K562 (cell line): ENCODE measurements at regions of chr3 and their contacts with region 1.

Region 1: GRCh38 chr3:157865352-157866000 is 240.7 kb downstream of the SHOX2 start:
- DNase-seq: peak; percentile 71 to 80 (median 76)
- ATAC-seq: peak; percentile 100
- H3K4me3 ChIP-seq: no peak overlapping the region
- H3K27ac ChIP-seq: no peak overlapping the region
- H3K4me1 ChIP-seq: no peaks in the 10 kb centered on the region
- H3K27me3 ChIP-seq: no peaks in the 10 kb centered on the region
- CTCF ChIP-seq: peak; percentile 80 to 94 (median 89)
- EP300 ChIP-seq: no peak
- POLR2A ChIP-seq: no peak
- RAD21 ChIP-seq: peak; percentile 93 to 94

Region 2: DNA sequence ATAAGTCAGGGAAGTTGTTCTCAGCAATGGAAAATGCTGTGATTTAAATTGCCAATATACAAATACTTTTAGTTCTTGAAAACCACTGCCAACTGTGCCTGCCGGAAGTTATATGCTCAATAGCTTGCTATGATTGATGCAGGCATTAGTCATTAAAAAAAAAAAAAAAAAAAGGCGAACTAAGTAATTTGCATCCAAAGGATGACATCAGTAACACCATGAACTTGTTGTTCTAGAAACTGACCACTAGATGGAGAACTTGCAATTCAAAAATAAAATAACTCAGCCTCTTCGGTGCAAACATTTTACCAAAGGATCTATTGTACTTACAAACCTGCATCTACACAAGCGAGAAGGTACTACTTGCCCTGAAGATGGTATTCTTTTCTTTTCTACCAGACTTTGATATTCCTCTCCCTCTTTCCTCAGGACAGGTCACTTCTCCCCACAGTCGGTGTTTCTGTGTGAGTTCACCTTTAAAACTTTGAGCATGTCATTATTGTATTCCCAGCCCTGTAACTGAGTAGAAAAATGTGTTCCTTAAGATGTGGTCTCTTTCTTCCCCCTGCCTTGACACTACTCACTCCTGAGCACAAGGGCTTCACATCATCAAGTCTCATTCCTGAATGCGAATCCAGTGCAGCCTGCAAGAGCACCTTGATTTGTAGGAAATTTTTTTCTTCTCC is 247.3 kb before region 1 on chr3:
- CTCF ChIA-PET with region 1: no interaction called
- POLR2A ChIA-PET with region 1: no interaction called
- in situ Hi-C with region 1: no loop called
- intact Hi-C with region 1: loop called (anchors 5 kb)
- DNase-seq: peak; percentile 57 to 70 (median 66)
- ATAC-seq: peak; percentile 78
- H3K4me3 ChIP-seq: no peak overlapping the region
- H3K27ac ChIP-seq: no peak overlapping the region
- H3K4me1 ChIP-seq: no peaks in the 10 kb centered on the region
- H3K27me3 ChIP-seq: peaks cover 0 to 6% of the 10 kb centered on the region in 2 experiments; a peak in 3 of 5 replicates
- CTCF ChIP-seq: peak; percentile 29 to 74 (median 60); a peak in 5 of 6 replicates
- EP300 ChIP-seq: no peak
- POLR2A ChIP-seq: no peak
- RAD21 ChIP-seq: peak; percentile 59 to 71

Region 3: GRCh38 chr3:157785102-157785826 is 80.2 kb before region 1 on chr3:
- CTCF ChIA-PET with region 1: no interaction called
- POLR2A ChIA-PET with region 1: no interaction called
- in situ Hi-C with region 1: no loop called
- intact Hi-C with region 1: no loop called
- DNase-seq: peak in 3 of 4 experiments; percentile 8 to 40 (median 33)
- ATAC-seq: peak; percentile 80
- H3K4me3 ChIP-seq: no peak overlapping the region
- H3K27ac ChIP-seq: no peak overlapping the region
- H3K4me1 ChIP-seq: no peaks in the 10 kb centered on the region; a peak in 1 of 5 replicates
- H3K27me3 ChIP-seq: no peaks in the 10 kb centered on the region
- CTCF ChIP-seq: no peak
- EP300 ChIP-seq: no peak
- POLR2A ChIP-seq: no peak
- RAD21 ChIP-seq: no peak

Region 4: GRCh38 chr3:158094235-158095110 is 229.0 kb after region 1 on chr3:
- CTCF ChIA-PET with region 1: no interaction called
- POLR2A ChIA-PET with region 1: no interaction called
- in situ Hi-C with region 1: no loop called
- intact Hi-C with region 1: loop called (anchors 5 kb)
- DNase-seq: no peak
- ATAC-seq: no peak
- H3K4me3 ChIP-seq: no peak overlapping the region
- H3K27ac ChIP-seq: no peak overlapping the region
- H3K4me1 ChIP-seq: no peaks in the 10 kb centered on the region
- H3K27me3 ChIP-seq: no peaks in the 10 kb centered on the region
- CTCF ChIP-seq: no peak
- EP300 ChIP-seq: no peak
- POLR2A ChIP-seq: no peak
- RAD21 ChIP-seq: no peak

Region 5: DNA sequence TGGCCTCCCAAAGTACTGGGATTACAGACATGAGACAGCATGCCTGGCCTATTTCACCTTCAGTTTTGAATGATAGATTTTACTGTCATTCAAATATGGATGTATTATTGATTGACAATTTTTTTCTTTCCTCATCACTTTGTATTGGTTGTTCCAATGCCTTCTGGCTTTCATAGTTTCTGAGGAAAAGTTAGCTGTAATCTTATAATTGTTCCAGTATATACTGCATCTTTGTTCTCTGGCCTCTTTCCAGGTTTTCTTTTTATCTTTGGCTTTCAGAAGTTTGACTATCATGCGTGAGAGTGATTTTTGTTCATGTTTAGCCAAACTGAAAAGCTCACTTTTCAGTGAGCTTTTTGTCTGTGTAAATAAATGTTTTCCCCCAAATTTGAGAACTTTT is 401.5 kb after region 1 on chr3:
- CTCF ChIA-PET with region 1: no interaction called
- POLR2A ChIA-PET with region 1: no interaction called
- in situ Hi-C with region 1: no loop called
- intact Hi-C with region 1: no loop called
- DNase-seq: peak in 1 of 4 experiments; percentile 18
- ATAC-seq: no peak
- H3K4me3 ChIP-seq: no peak overlapping the region
- H3K27ac ChIP-seq: no peak overlapping the region
- H3K4me1 ChIP-seq: no peaks in the 10 kb centered on the region
- H3K27me3 ChIP-seq: no peaks in the 10 kb centered on the region
- CTCF ChIP-seq: no peak
- EP300 ChIP-seq: no peak
- POLR2A ChIP-seq: no peak
- RAD21 ChIP-seq: no peak; a peak in 1 of 4 replicates

Region 6: DNA sequence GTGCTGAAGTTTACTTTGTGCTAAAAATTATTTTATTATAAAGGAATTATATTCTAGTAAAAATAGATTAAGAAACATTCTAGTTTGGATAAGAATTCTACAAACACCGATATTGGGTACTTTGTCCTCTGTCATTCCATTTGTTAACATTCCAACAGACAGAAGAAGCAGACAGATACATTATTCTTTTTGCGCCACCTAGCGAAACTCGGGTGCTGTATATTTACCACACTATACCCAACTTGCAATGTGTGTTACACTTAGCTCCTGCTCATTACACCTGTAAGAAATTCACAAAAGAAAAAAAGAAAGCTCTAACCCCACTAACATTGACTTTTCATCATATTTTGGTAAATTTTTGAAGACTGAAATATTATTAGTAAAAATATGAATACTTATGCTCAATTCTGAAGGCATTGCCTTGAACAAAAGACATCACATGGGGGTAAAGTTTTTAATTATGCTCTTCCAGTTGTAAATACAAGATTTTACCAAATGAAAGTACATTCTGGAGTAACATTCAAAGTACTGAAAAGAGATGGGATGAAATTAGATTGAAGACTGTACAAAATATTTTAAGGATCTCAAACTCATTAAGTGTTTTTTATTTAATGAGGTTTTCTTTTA is 569.0 kb after region 1 on chr3:
- CTCF ChIA-PET with region 1: interaction called, 9 read pairs
- POLR2A ChIA-PET with region 1: no interaction called
- in situ Hi-C with region 1: no loop called
- intact Hi-C with region 1: loop called (anchors 1 kb)
- DNase-seq: peak; percentile 11 to 80 (median 24)
- ATAC-seq: peak; percentile 98
- H3K4me3 ChIP-seq: no peak overlapping the region
- H3K27ac ChIP-seq: no peak overlapping the region
- H3K4me1 ChIP-seq: no peaks in the 10 kb centered on the region
- H3K27me3 ChIP-seq: no peaks in the 10 kb centered on the region
- CTCF ChIP-seq: peak; percentile 55 to 85 (median 67)
- EP300 ChIP-seq: no peak
- POLR2A ChIP-seq: no peak
- RAD21 ChIP-seq: peak; percentile 87 to 91

Region 7: DNA sequence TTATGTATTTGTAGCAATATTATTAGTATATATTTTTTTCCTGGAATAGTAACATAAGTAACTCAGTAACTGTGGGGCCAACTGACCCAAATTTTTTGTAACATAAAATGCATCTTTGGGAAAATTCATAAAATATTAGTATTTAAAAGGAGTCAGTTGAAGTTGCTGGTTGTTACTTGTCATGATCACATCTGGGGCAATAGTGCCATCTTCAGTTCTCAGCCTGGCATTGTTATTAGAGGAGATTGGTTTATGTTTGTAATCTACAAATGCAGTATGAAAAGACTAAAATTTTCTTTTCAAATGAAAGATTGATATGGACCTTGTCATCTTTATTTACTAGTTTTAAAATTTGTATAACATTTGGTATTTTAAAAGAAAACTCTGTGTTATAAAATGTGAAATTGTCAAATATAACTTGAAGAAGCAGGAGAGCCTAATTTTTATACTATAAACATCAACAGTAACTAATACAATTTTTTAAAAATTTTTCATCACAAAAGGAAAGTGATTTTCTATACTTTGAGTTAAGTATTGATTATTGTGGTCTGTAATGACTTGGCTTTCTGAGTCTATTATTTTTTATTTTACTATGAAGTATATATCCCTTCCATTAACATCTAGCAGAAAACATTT is 666.7 kb after region 1 on chr3:
- CTCF ChIA-PET with region 1: no interaction called
- POLR2A ChIA-PET with region 1: no interaction called
- in situ Hi-C with region 1: no loop called
- intact Hi-C with region 1: loop called (anchors 5 kb)
- DNase-seq: peak; percentile 8 to 39 (median 16)
- ATAC-seq: no peak
- H3K4me3 ChIP-seq: no peak overlapping the region
- H3K27ac ChIP-seq: no peak overlapping the region
- H3K4me1 ChIP-seq: no peaks in the 10 kb centered on the region
- H3K27me3 ChIP-seq: no peaks in the 10 kb centered on the region
- CTCF ChIP-seq: peak in 2 of 3 experiments; percentile 33 to 65; a peak in 3 of 6 replicates
- EP300 ChIP-seq: no peak
- POLR2A ChIP-seq: no peak
- RAD21 ChIP-seq: peak; percentile 46 to 59